ENCODE measurements at regions of chr1 and their contacts with region 1.

Region 1: GRCh38 chr1:200971955-200972711 is 51.4 kb downstream of the KIF21B start:
- DNase-seq: peak; percentile 52 to 77 (median 65)
- H3K4me3 ChIP-seq: no peak overlapping the region
- H3K27ac ChIP-seq: no peak overlapping the region
- H3K4me1 ChIP-seq: no peaks in the 10 kb centered on the region
- H3K27me3 ChIP-seq: peaks cover 3% of the 10 kb centered on the region
- CTCF ChIP-seq: peak; percentile 47 to 98 (median 71)
- POLR2A ChIP-seq: no peak

Region 2: GRCh38 chr1:201042779-201043461 is 70.8 kb after region 1 on chr1:
- intact Hi-C with region 1: loop called (anchors 1 to 2 kb)
- DNase-seq: peak; percentile 48 to 82 (median 68)
- H3K4me3 ChIP-seq: no peak overlapping the region
- H3K27ac ChIP-seq: no peak overlapping the region
- H3K4me1 ChIP-seq: peaks cover 0 to 5% of the 10 kb centered on the region in 2 donors
- H3K27me3 ChIP-seq: no peaks in the 10 kb centered on the region
- CTCF ChIP-seq: peak; percentile 57 to 90 (median 84)
- POLR2A ChIP-seq: no peak

Region 3: GRCh38 chr1:201119206-201120197 is 147.4 kb after region 1 on chr1:
- intact Hi-C with region 1: loop called (anchors 2 to 5 kb)
- DNase-seq: peak in 5 of 7 donors; percentile 29 to 58 (median 46)
- H3K4me3 ChIP-seq: no peak overlapping the region
- H3K27ac ChIP-seq: no peak overlapping the region
- H3K4me1 ChIP-seq: no peaks in the 10 kb centered on the region
- H3K27me3 ChIP-seq: peaks cover 15% of the 10 kb centered on the region
- CTCF ChIP-seq: peak; percentile 11 to 55 (median 42)
- POLR2A ChIP-seq: no peak

Region 4: GRCh38 chr1:201229771-201230635 is 257.9 kb after region 1 on chr1:
- intact Hi-C with region 1: loop called in 1 of 2 experiments (anchors 10 kb)
- DNase-seq: peak in 1 of 7 donors; percentile 24
- H3K4me3 ChIP-seq: no peak overlapping the region
- H3K27ac ChIP-seq: no peak overlapping the region
- H3K4me1 ChIP-seq: no peaks in the 10 kb centered on the region
- H3K27me3 ChIP-seq: no peaks in the 10 kb centered on the region
- CTCF ChIP-seq: no peak
- POLR2A ChIP-seq: no peak

Measured in adrenal gland (tissue), 19 donors.